ENCODE measurements at regions of chr1 and their contacts with region 1.

Region 1: DNA sequence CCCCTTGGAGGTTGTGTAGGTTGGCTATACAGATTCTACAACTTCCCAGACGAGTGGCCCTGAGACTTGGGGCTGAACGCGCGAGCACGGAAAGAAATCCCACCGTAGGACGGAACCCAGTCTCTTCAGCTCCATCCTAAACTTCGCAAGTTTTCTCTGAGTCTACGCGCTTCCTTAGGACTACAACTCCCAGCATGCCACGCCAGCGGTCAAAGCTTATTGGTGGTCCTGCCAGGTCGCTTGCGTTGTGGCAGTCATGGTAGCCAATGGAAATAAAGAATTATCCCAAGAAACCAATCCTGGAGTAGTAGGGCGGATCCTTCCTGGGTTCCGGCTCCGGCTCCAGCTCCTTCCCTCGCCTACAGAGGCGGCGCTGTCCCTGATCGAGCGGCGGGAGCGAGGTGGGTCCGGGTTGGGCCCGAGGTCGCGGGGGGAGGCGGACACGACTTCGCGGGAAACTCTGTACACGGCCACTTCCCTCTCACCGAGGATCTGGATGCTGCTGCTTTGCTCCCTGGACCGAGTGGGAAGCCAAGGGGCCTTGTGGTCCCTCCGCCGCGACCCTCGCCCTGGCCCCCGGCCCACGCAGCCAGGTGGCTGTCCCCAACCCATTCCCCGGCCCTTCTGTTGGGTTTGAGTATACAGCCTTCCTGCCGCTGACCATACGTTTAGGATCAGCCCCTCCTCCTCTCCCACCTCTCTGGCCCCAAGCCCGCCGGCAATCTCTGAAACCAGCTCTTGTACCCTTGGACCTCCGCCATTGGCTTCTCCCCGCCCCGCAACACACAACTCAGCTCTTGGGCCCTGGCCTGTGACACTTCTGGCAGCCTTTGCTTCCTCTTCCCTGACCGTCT is at the start of gene ZNF691:
- DNase-seq: peak; percentile 97
- total RNA-seq, gene ZNF691: 4.5 to 5.1 TPM

Region 2: GRCh38 chr1:42766741-42767509 is 79.6 kb before region 1 on chr1 and contains the starts of genes C1orf50 and P3H1:
- intact Hi-C with region 1: loop called in 1 of 2 experiments (anchors 5 kb)
- DNase-seq: peak; percentile 100
- total RNA-seq, gene C1orf50: 6.0 to 6.5 TPM
- total RNA-seq, gene P3H1: 28.4 to 45.0 TPM

Region 3: GRCh38 chr1:42860339-42861013 is 14.0 kb after region 1 on chr1:
- intact Hi-C with region 1: no loop called
- DNase-seq: no peak

Region 4: DNA sequence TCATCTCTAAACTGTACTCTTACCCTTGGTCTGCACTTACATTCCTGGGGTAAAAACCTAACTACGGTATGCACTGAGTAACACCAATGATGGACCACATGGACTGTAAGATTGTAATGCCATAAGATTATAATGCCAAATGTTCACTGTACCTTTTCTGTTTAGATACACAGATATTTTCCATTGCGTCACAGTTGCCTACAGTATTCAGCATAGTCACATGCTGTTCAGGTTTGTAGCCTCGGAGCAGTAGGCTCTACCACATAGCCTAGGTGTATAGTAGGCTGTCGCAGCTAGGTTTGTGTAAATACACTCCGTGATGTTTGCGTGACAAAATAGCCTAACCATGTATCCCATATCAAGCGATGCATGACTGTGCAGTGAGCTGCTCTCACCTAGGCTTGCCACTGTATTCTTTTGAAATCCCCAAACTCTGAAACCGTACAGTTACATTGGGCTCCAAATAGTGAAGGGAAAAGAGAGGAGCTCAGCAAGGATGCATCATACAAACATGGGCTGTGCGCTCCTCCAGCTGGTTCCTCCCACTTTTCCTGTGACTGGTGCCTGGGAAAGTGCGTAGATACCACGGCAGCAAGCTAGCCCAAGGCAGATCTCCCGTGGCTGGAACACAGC is 360.9 kb after region 1 on chr1:
- intact Hi-C with region 1: no loop called
- DNase-seq: no peak